Ovary (tissue), 10 donors: ENCODE measurements at regions of chr13 and their contacts with region 1.

Region 1: GRCh38 chr13:37109051-37109678 is 3.7 kb upstream of the CSNK1A1L start:
- DNase-seq: no peak
- H3K4me3 ChIP-seq: no peak overlapping the region
- H3K27ac ChIP-seq: no peak overlapping the region
- H3K4me1 ChIP-seq: no peaks in the 10 kb centered on the region
- H3K27me3 ChIP-seq: no peaks in the 10 kb centered on the region
- CTCF ChIP-seq: peak in 2 of 3 donors; percentile 30 to 40
- EP300 ChIP-seq: no peak
- POLR2A ChIP-seq: no peak

Region 2: GRCh38 chr13:37602747-37603381 is 493.7 kb after region 1 on chr13:
- intact Hi-C with region 1: loop called in 1 of 4 experiments (anchors 10 kb)
- DNase-seq: no peak
- H3K4me3 ChIP-seq: no peak overlapping the region
- H3K27ac ChIP-seq: no peak overlapping the region
- H3K4me1 ChIP-seq: peaks cover 1% of the 10 kb centered on the region
- H3K27me3 ChIP-seq: no peaks in the 10 kb centered on the region
- CTCF ChIP-seq: no peak
- EP300 ChIP-seq: no peak
- POLR2A ChIP-seq: no peak